ENCODE measurements at regions of chr5 and their contacts with region 1.

Region 1: DNA sequence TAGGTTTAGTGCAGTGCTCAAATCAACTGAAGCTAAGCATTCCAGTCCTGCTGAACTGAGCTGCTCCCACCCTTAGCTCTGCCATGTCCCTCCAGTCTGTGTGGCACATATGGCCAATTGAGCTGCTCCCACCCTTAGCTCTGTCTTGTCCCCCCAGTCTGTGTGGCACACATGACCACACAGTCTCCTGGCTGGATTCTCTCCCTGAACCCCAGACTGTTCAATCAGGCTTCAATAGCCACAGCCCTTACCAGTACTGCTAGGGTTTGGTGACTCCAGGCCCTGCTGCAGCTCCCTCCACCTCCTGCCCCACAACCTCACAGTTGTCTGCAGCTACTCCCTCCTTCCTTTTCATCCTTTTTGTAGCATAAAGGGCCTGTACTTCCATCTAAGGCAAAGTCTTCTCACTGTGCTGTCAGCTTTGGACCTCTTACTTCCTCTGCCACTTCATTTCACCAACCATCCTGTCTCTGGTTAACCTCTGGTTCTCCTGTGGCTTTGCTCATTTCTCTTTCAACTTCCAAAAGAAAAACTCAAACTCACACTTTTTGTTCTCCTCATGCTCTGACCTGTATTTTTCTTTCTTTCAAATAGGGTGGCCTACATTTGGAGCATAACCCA is 50.8 kb downstream of the ADAMTS12 start:
- DNase-seq: no peak
- H3K4me3 ChIP-seq: no peak overlapping the region
- H3K27ac ChIP-seq: peak overlapping the region; percentile 31
- H3K4me1 ChIP-seq: peaks cover 38% of the 10 kb centered on the region
- H3K27me3 ChIP-seq: no peaks in the 10 kb centered on the region
- CTCF ChIP-seq: no peak

Region 2: GRCh38 chr5:33891788-33892619 is 51.0 kb after region 1 on chr5 and contains the start of gene ADAMTS12:
- CTCF ChIA-PET with region 1: no interaction called
- dilution Hi-C with region 1: no loop called
- in situ Hi-C with region 1: no loop called
- intact Hi-C with region 1: loop called (anchors 5 kb)
- DNase-seq: peak; percentile 49
- H3K4me3 ChIP-seq: peak within 1 kb of the TSS; percentile 15 to 58 (median 31)
- H3K27ac ChIP-seq: peak within 1 kb of the TSS; percentile 26
- H3K4me1 ChIP-seq: peaks cover 7% of the 10 kb centered on the region
- H3K27me3 ChIP-seq: no peaks in the 10 kb centered on the region
- CTCF ChIP-seq: no peak
- total RNA-seq, gene ADAMTS12: 3.7 to 17.8 TPM

Measured in mammary epithelial cell (primary cell).